ENCODE measurements at regions of chr7 and their contacts with region 1.

Region 1: GRCh38 chr7:26365077-26365900 is 73.6 kb downstream of the SNX10 start:
- DNase-seq: peak; percentile 88
- H3K4me3 Mint-ChIP-seq: no peak overlapping the region
- H3K27ac Mint-ChIP-seq: no peak overlapping the region
- H3K4me1 Mint-ChIP-seq: peaks cover 15% of the 10 kb centered on the region
- H3K27me3 Mint-ChIP-seq: no peaks in the 10 kb centered on the region

Region 2: GRCh38 chr7:25552998-25553397 is 812.3 kb before region 1 on chr7:
- intact Hi-C with region 1: no loop called
- DNase-seq: no peak
- H3K4me3 Mint-ChIP-seq: no peak overlapping the region
- H3K27ac Mint-ChIP-seq: no peak overlapping the region
- H3K4me1 Mint-ChIP-seq: peaks cover 5% of the 10 kb centered on the region
- H3K27me3 Mint-ChIP-seq: peaks cover 10% of the 10 kb centered on the region

Region 3: DNA sequence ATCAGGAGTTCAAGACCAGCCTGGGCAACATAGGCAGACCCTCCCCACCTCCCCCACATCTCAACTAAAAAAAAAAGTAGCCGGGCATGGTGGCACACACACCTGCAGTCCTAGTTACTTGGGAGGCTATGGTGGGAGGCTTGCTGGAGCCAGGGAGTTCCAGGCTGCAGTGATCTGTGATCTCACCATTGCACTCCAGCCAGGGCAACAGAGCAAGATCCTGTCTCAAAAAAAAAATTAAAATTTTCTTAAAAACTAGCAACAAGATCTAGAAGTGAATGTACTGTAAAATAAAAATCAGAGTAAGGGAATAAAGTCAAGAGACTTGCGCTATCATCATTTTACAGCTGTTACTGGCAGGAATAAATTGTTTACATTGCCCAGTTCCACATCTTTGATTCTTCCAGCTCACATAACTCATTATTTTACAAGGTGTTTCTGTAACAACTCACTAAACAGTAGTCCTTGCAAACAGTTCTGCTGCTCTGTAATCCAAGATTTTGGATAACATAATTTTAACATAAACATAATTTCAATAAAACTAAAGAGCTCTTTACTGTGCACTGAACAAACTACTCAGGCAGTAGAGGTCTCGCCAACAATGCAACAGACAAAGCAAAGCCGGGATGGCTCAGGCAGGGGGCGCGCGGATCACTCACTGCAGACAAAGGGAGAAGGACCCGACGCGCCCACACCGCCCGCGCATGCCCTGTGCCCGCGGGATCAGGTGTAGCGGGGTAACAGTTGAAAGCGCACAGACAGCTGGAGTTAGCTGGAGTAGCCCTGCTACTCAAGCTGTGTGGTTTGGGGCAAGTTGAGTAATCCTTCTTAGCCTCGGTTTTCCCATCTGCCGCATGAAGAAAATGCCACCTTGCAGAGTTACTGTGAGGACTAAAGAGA is 286.6 kb before region 1 on chr7:
- intact Hi-C with region 1: loop called (anchors 5 kb)
- DNase-seq: peak; percentile 93
- H3K4me3 Mint-ChIP-seq: peak overlapping the region; percentile 5
- H3K27ac Mint-ChIP-seq: no peak overlapping the region
- H3K4me1 Mint-ChIP-seq: peaks cover 8% of the 10 kb centered on the region
- H3K27me3 Mint-ChIP-seq: peaks cover 71% of the 10 kb centered on the region

Region 4: GRCh38 chr7:26200444-26201246 is 164.6 kb before region 1 on chr7 and contains the start of gene HNRNPA2B1:
- intact Hi-C with region 1: loop called (anchors 2 kb)
- DNase-seq: peak; percentile 100
- H3K4me3 Mint-ChIP-seq: peak within 1 kb of the TSS; percentile 100
- H3K27ac Mint-ChIP-seq: peak within 1 kb of the TSS; percentile 99
- H3K4me1 Mint-ChIP-seq: peaks cover 51% of the 10 kb centered on the region
- H3K27me3 Mint-ChIP-seq: peaks cover 7% of the 10 kb centered on the region
- total RNA-seq, gene HNRNPA2B1: 862 and 873 TPM in 2 replicates

Region 5: GRCh38 chr7:26291699-26292538 is 73.4 kb before region 1 on chr7 and contains the start of gene SNX10:
- intact Hi-C with region 1: loop called (anchors 2 kb)
- DNase-seq: peak; percentile 92
- H3K4me3 Mint-ChIP-seq: peak within 1 kb of the TSS; percentile 98
- H3K27ac Mint-ChIP-seq: peak within 1 kb of the TSS; percentile 91
- H3K4me1 Mint-ChIP-seq: peaks cover 32% of the 10 kb centered on the region
- H3K27me3 Mint-ChIP-seq: peaks cover 4% of the 10 kb centered on the region
- total RNA-seq, gene SNX10: 40.1 and 42.1 TPM in 2 replicates

Region 6: GRCh38 chr7:26441002-26441521 is 75.8 kb after region 1 on chr7:
- intact Hi-C with region 1: no loop called
- DNase-seq: no peak
- H3K4me3 Mint-ChIP-seq: no peak overlapping the region
- H3K27ac Mint-ChIP-seq: no peak overlapping the region
- H3K4me1 Mint-ChIP-seq: no peaks in the 10 kb centered on the region
- H3K27me3 Mint-ChIP-seq: peaks cover 7% of the 10 kb centered on the region

Region 7: DNA sequence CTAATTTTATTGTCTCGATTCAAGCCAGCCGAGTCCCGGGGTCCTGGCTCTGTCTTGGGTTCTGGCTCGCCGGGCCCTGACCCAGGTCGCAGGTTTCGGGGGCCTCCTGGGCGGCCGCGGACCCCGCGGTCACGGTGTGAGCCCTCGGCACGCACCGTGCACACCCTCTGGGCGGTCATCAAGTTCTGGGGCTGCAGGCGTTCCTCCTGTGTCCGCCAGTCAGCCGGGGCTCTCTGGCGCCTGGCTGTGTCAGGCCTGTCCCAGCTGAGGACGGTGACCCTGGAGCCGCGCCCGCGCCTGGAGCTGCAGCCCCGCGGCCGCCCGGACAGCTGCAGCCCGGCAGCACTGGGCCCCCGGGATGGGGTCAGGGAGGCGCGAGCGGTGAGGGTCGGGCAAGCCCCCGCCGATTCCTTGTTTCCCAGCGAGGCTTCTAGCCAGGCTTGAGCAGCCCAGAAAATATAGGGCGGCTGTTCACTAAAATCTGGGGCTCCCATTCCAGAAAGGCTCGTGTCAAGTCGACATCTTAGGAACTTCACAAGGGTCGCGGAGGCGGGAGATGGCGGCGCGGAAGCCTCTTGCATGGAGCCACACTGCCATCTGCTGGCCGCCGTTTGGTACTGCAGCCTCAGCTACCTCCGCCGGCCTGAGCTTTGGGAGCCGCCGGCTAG is 795.4 kb after region 1 on chr7:
- intact Hi-C with region 1: loop called (anchors 1 kb)
- DNase-seq: peak; percentile 93
- H3K4me3 Mint-ChIP-seq: peak overlapping the region; percentile 72
- H3K27ac Mint-ChIP-seq: no peak overlapping the region
- H3K4me1 Mint-ChIP-seq: peaks cover 4% of the 10 kb centered on the region
- H3K27me3 Mint-ChIP-seq: peaks cover 74% of the 10 kb centered on the region

Measured in activated CD4-positive, alpha-beta T cell treated with anti-CD3 and anti-CD28 coated beads, Interleukin-2, amount 10 ng/mL, durations not matched to agents 24 days and 14 days (primary cell).